ENCODE measurements at regions of chr12 and their contacts with region 1.

Region 1: DNA sequence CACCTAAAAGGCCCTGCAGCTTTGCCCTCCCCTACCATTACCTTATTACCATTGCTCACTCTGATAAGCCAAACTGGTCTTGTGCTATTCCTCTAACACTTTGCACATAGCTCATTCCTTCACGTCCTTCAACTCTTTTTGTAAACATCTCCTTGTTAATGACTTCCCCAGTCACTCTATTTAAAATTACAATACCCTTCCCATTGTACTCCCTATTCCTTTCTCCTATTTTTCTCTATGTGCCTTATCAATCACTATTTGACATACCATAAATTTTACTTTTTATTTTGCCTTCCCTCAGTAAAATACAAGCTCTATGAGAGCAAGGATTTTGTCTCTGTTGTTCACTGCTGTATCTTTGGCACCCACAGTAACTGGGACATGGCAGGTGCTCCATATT is 5.4 kb downstream of the SARNP start:
- DNase-seq: no peak
- H3K4me3 ChIP-seq: no peak overlapping the region
- H3K27me3 ChIP-seq: no peaks in the 10 kb centered on the region
- CTCF ChIP-seq: no peak

Region 2: GRCh38 chr12:55797068-55797467 is 15.0 kb before region 1 on chr12:
- CTCF ChIA-PET with region 1: interaction called, 20 read pairs
- POLR2A ChIA-PET with region 1: no interaction called
- DNase-seq: no peak
- H3K4me3 ChIP-seq: no peak overlapping the region
- H3K27me3 ChIP-seq: no peaks in the 10 kb centered on the region
- CTCF ChIP-seq: peak; percentile 69

Region 3: DNA sequence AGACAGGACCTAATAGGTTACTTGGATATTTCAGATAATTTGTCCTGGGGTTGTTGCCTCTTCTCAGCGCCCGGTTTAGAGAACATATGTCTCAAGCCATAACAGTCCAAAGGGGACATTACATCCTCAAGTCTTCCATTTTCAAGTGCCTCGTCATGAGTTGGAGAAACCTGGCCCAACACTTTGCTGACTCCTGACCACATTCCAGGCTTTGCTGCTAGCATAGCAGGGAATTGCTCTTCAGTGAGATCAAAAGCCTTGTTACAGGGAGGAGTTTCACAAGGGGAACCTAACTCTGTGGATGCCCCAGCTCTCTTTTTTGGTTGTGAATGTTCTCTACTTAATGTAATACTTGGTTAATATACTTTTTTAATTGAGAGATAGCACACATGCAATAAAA is 38.8 kb after region 1 on chr12:
- CTCF ChIA-PET with region 1: no interaction called
- POLR2A ChIA-PET with region 1: no interaction called
- DNase-seq: no peak
- H3K4me3 ChIP-seq: no peak overlapping the region
- H3K27me3 ChIP-seq: no peaks in the 10 kb centered on the region
- CTCF ChIP-seq: no peak

Measured in BJ (cell line).